ENCODE measurements at regions of chr11 and their contacts with region 1.

Region 1: GRCh38 chr11:236774-237767 is at the start of gene PSMD13:
- DNase-seq: peak; percentile 57 to 78
- ATAC-seq: peak; percentile 87 to 91
- H3K4me3 ChIP-seq: peak within 1 kb of the TSS; percentile 88 to 100 (median 98)
- H3K27ac ChIP-seq: peak within 1 kb of the TSS; percentile 97 to 99 (median 97)
- H3K4me1 ChIP-seq: peaks cover 42 to 43% of the 10 kb centered on the region in 2 donors
- H3K27me3 ChIP-seq: no peaks in the 10 kb centered on the region
- CTCF ChIP-seq: no peak
- POLR2A ChIP-seq: peak; percentile 71 to 94
- total RNA-seq, gene PSMD13: 128 to 189 (median 163) TPM

Region 2: DNA sequence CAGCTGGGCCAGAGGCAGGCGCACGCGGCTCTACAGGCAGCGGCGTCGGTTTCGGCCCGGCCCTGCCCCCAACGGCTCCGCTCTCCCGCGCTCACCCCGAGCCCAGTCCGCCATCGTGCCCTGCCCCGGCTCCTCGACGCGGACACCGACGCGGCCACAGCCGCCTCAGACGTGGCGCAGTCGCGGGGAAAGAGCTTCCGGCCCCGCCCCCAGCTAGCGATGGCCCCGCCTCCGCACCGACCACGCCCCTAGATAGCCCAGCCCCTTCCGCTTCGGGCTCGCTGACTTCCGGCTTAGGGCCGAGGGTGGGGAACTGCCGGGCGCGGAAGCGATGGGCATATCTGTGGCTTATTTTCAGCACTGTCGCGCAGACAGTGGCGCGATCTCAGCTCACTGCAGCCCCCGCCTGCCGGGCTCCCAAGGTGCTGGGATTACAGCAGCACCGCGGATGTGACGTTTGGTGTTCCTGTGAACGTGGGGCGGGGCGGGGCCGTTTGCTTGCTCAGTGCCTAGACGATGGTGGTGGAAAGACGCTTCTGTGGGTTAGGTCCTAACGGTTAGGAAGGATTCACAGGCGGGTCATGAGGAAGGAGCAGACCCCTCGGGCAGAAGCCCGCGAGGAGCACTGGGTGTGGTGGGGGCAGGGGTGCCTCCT is 29.7 kb before region 1 on chr11 and contains the starts of genes BET1L and RIC8A:
- in situ Hi-C with region 1: no loop called
- intact Hi-C with region 1: loop called (anchors 1 kb)
- DNase-seq: peak; percentile 87 to 96
- ATAC-seq: peak; percentile 84 to 87
- H3K4me3 ChIP-seq: peak within 1 kb of the TSS; percentile 72 to 99 (median 84)
- H3K27ac ChIP-seq: peak within 1 kb of the TSS; percentile 95 to 100 (median 98)
- H3K4me1 ChIP-seq: peaks cover 26 to 41% of the 10 kb centered on the region in 2 donors
- H3K27me3 ChIP-seq: no peaks in the 10 kb centered on the region
- CTCF ChIP-seq: no peak
- POLR2A ChIP-seq: peak; percentile 94 to 96
- total RNA-seq, gene BET1L: 11.3 to 15.9 (median 12.8) TPM
- total RNA-seq, gene RIC8A: 35.6 to 68.5 (median 47.8) TPM

Region 3: DNA sequence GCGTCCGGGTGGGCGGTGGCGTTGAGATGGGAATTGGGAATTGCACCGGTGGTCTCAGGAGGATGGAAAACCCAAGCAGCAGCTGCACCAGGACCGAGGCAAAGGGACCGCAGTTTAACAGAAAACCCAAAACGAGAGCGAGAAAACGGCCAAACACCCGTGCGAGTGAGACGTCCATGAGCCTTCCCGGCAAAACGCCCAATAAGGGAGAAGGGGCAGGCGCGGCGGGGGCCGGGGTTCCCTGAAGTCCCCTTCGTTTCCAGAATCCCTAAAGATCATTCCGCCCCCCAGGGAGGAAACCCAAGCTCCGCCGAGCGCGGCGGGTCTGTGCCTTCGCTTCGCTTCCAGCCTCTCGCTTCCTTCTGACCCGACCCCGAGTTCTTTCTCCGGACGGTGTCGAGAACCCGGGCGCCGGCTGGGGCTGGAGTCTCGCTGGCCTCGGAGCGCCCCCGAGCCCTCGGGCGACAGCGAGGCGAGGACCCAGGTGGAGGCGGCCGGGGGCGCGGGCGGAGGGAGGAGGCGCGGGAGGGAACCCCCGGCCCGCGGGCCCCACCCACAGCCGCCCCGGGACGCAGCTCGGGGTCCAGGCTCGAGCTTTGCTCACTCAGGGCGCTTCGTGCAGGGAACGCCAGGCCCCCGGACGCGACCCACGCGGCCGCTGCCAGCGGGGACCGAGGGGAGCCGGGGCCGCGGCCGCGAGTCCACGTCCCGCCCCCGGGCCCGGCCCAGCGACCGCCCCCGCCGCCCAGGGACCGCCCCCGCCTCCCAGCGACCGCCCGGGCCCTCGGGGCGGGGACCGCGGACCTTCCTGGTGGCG is 51.5 kb after region 1 on chr11 and contains the start of gene PGGHG:
- in situ Hi-C with region 1: no loop called
- intact Hi-C with region 1: loop called (anchors 5 kb)
- DNase-seq: peak in 1 of 2 donors; percentile 43
- ATAC-seq: peak; percentile 59 to 70
- H3K4me3 ChIP-seq: peak within 1 kb of the TSS; percentile 56 to 62 (median 58)
- H3K27ac ChIP-seq: peak within 1 kb of the TSS; percentile 43 to 58 (median 51)
- H3K4me1 ChIP-seq: no peaks in the 10 kb centered on the region
- H3K27me3 ChIP-seq: peaks cover 22 to 31% (median 26%) of the 10 kb centered on the region in 3 donors
- CTCF ChIP-seq: no peak
- POLR2A ChIP-seq: no peak
- total RNA-seq, gene PGGHG: 0.98 to 3.4 (median 2.7) TPM

Region 4: GRCh38 chr11:313787-314547 is 76.9 kb after region 1 on chr11 and contains the start of gene IFITM1:
- in situ Hi-C with region 1: no loop called
- intact Hi-C with region 1: no loop called
- DNase-seq: no peak
- ATAC-seq: peak; percentile 59 to 64
- H3K4me3 ChIP-seq: peak within 1 kb of the TSS; percentile 46 to 61 (median 54)
- H3K27ac ChIP-seq: peak within 1 kb of the TSS; percentile 74 to 82 (median 78)
- H3K4me1 ChIP-seq: peaks cover 0 to 5% of the 10 kb centered on the region in 2 donors
- H3K27me3 ChIP-seq: peaks cover 8 to 23% (median 8%) of the 10 kb centered on the region in 3 donors
- CTCF ChIP-seq: no peak
- POLR2A ChIP-seq: peak; percentile 50 to 78
- total RNA-seq, gene IFITM1: 47.8 to 103 (median 80.5) TPM